Posterior vena cava (tissue), 2 donors: ENCODE measurements at regions of chr20 and their contacts with region 1.

Region 1: DNA sequence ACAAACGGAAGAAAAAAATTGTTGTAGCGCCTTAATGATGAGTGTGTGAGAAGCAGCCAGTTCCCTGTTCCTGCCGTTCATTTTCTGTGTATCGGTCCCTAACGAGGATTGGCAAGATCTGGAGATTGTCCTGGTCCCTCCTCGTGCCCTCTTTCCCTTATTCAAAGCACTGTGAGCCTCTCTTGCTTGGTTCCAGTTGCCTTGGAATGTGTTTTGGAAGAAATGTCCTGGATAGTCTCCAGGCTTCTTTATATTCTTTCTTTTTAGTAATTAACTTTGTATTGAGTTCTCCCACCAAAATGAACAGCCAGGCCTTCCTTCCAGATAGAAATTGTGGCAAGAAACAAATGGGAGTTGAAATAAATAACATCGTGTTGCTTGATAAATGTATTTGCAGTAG is 348.3 kb downstream of the CDH26 start:
- DNase-seq: no peak

Region 2: GRCh38 chr20:60249436-60249835 is 57.1 kb before region 1 on chr20:
- intact Hi-C with region 1: loop called in 1 of 2 experiments (anchors 10 kb)
- DNase-seq: no peak

Region 3: GRCh38 chr20:60292001-60292520 is 14.5 kb before region 1 on chr20:
- intact Hi-C with region 1: no loop called
- DNase-seq: no peak